ENCODE measurements at regions of chr7 and their contacts with region 1.

Region 1: GRCh38 chr7:129210256-129210988 is 14.4 kb upstream of the AHCYL2 start:
- DNase-seq: peak; percentile 82 to 88 (median 86)
- ATAC-seq: peak; percentile 90
- H3K4me3 ChIP-seq: no peak overlapping the region
- H3K27ac ChIP-seq: no peak overlapping the region
- H3K4me1 ChIP-seq: peaks cover 5 to 7% of the 10 kb centered on the region in 2 experiments; a peak in 3 of 5 replicates
- H3K27me3 ChIP-seq: peaks cover 52 to 75% of the 10 kb centered on the region in 2 experiments
- CTCF ChIP-seq: peak; percentile 93 to 94 (median 94)
- EP300 ChIP-seq: no peak
- POLR2A ChIP-seq: no peak
- RAD21 ChIP-seq: peak; percentile 84 to 94

Region 2: DNA sequence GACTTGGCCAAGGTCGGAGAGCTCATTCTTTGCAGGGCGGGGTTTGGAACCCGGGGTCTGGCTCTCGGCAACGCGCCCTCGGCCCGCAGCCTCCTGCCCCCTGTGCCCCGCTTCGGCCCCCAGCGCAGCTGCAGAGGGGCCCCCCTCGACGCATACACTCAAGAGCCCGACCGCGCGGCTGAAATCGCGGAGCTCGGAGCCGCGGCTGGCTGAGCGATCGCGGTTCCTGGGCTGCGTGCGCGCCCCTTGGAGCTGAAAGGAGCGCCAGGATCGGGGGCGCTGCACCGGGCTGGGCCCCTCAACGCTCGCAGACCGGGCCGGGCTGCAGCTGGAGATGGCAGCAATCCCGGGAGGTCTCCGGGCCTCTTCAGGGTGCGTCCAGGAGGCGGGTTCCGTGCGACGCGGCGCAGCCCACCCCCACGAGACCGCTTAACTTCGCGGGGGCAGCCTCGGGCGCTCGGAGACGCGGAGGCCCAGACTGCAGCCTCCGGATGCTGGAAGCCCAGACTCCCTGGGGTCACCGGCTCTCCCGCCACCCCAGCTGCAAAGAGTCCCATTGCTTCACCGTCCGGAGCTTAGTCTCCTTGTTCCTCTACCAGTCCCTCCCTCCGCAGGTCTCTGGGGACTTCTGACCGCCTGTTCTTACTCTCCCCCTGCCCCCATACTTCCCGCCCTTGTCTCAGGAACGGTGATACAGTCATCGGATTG is 1106.2 kb before region 1 on chr7:
- CTCF ChIA-PET with region 1: no interaction called
- POLR2A ChIA-PET with region 1: no interaction called
- in situ Hi-C with region 1: no loop called
- intact Hi-C with region 1: no loop called
- DNase-seq: no peak
- ATAC-seq: no peak
- H3K4me3 ChIP-seq: no peak overlapping the region
- H3K27ac ChIP-seq: no peak overlapping the region
- H3K4me1 ChIP-seq: peaks cover 9 to 24% of the 10 kb centered on the region in 2 experiments; a peak in 4 of 5 replicates
- H3K27me3 ChIP-seq: peaks cover 9 to 26% of the 10 kb centered on the region in 2 experiments; a peak in 3 of 5 replicates
- CTCF ChIP-seq: no peak
- EP300 ChIP-seq: no peak
- POLR2A ChIP-seq: no peak
- RAD21 ChIP-seq: no peak

Region 3: DNA sequence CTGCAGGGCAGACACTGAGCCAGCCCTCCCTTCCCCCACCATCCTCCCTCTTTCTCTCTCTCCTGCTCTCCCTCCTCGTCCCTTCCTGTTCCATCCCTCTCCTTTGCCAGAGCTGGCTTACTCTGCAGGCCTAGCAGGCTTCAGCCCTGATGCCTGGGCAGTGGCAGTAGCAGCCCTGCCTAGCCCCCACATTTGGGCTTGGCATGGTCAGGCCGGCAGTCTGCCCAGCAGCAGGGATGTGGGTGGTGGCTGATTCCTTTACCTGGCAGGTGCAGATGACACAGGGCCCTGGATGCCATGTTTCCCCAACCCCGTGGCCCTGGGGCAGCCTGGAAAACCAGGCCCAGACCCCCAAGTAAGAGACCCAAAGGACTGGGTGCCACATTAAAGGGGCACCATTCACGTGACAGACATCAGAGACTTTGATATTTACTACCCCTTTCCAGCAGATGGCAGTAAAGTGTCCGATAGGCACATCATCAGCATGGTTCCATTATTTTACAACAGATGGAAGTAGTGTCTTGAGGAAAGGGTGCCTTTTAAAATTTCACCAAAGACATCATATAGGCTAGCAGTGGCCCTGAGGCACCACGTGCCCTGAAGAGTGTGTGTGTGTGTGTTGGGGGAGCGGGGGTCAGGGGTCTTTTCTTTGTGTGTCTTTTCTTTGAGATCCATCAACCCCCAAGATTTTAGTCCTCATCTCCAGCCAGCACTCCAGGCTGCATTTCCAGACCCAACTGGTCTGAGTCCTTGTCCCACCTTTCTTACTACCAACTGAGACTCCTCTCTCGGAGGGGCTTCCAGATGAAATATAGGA is 305.8 kb before region 1 on chr7:
- CTCF ChIA-PET with region 1: interaction called, 5 read pairs
- POLR2A ChIA-PET with region 1: no interaction called
- in situ Hi-C with region 1: no loop called
- intact Hi-C with region 1: loop called (anchors 1 kb)
- DNase-seq: peak; percentile 64 to 78 (median 72)
- ATAC-seq: peak; percentile 76
- H3K4me3 ChIP-seq: no peak overlapping the region
- H3K27ac ChIP-seq: no peak overlapping the region
- H3K4me1 ChIP-seq: peaks cover 13 to 29% of the 10 kb centered on the region in 2 experiments
- H3K27me3 ChIP-seq: peaks cover 16 to 32% of the 10 kb centered on the region in 2 experiments
- CTCF ChIP-seq: peak; percentile 86 to 92 (median 91)
- EP300 ChIP-seq: no peak
- POLR2A ChIP-seq: no peak
- RAD21 ChIP-seq: peak; percentile 60 to 79

Region 4: DNA sequence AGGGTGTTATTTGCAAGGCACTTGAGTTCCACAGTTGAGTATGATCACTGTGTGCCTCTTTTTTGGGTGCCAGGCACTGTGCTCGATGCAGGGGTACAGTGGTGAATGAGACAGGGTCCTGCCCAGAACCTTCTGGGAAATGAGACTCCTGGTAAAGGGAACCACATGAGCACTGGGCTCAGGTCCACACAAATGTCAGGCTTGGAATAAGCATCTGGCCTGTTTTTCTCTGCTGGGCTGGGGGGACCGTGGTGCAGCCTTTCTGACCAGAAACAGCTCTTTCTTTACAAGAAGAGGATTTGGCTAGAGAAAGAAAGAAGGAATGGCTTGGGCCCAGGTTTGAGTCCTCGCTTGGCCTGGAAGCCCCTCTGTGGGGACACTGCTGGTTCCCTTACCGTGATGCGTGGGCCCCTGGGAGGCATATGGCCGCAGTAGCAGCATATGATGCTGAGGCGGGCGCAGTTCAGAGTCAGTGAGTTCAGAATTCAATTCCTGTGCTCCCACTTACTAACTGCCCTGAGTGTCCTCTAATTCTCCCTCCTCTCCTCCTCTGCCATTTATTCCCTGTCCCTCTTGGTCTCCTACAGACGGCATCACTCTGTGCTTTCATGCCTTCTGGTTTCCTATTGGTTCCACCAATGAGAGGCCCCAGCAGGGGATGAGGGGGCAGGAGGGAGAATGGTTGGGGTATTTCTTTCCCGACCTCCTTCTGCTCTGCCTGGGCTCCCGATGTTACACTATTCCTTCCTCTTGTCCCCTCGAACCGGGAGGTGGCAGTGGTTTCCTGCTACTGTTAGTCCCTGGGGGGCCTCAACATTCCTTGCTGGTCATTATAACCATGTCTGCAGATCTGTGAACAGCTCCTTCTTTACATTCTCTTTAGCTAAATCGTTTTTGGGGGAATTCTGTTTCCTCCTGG is 290.3 kb before region 1 on chr7:
- CTCF ChIA-PET with region 1: no interaction called
- POLR2A ChIA-PET with region 1: no interaction called
- in situ Hi-C with region 1: no loop called
- intact Hi-C with region 1: loop called (anchors 5 kb)
- DNase-seq: peak in 1 of 4 experiments; percentile 36
- ATAC-seq: peak; percentile 54
- H3K4me3 ChIP-seq: no peak overlapping the region
- H3K27ac ChIP-seq: no peak overlapping the region
- H3K4me1 ChIP-seq: peaks cover 0 to 10% of the 10 kb centered on the region in 2 experiments; a peak in 2 of 5 replicates
- H3K27me3 ChIP-seq: peaks cover 75 to 82% of the 10 kb centered on the region in 2 experiments
- CTCF ChIP-seq: peak; percentile 33 to 50 (median 35); a peak in 3 of 6 replicates
- EP300 ChIP-seq: no peak
- POLR2A ChIP-seq: no peak
- RAD21 ChIP-seq: peak in 1 of 2 experiments; percentile 53; a peak in 2 of 4 replicates

Region 5: DNA sequence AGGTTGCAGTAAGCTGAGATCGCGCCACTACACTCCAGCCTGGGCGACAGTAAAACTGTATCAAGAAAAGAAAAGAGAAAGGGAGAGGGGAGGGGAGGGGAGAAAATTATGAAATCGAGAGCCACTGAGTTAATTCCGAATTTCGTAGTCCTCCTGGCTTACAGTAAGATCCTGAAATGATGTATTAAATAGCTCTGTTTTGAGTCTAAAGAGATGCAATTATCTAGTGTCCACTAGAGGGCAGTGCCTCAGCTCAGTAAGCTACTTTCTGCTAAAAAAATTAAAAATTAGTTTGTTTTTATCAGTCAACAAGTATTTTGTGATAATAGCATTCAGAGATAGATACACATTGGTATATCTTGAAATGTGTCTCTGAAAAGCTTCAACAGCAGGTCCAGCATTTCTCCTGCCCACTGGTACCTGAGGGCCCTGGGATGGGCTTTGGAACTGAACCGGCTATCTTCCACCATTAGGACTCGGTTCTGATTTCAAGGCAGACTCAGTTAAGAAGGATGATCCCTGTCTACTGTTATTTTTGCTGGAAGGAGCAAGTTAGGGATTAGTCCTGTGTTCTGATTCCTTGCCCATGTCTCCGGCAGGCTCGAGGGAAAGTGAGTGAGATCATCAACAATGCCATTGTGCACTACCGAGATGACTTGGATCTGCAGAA is 46.4 kb before region 1 on chr7:
- CTCF ChIA-PET with region 1: interaction called, 5 read pairs
- POLR2A ChIA-PET with region 1: no interaction called
- in situ Hi-C with region 1: no loop called
- intact Hi-C with region 1: loop called (anchors 1 kb)
- DNase-seq: peak; percentile 65 to 74 (median 68)
- ATAC-seq: peak; percentile 69
- H3K4me3 ChIP-seq: no peak overlapping the region
- H3K27ac ChIP-seq: no peak overlapping the region
- H3K4me1 ChIP-seq: peaks cover 4 to 6% of the 10 kb centered on the region in 2 experiments; a peak in 4 of 5 replicates
- H3K27me3 ChIP-seq: peaks cover 15 to 57% of the 10 kb centered on the region in 2 experiments
- CTCF ChIP-seq: peak; percentile 69 to 96 (median 88); a peak in 5 of 6 replicates
- EP300 ChIP-seq: no peak
- POLR2A ChIP-seq: no peak
- RAD21 ChIP-seq: peak; percentile 55 to 79

Region 6: DNA sequence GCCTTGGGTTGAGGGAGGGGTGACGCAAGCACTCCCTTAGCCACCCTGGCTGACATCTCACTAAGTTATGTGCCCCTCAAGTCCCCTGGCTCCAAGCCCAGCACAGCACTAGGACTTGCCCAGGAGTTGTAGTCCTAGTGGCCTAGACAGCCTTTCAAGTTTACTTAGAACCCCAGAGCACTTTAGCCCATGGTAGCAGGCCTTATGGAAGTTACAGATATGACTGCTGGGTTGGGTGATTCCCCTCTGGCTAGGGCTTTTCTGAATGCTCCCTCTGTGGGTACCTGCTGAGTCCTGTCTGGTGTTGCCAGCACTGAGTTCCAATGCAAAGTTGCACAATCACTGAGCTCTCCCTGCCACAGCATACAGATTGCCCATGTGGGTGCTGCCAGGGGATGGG is 97.6 kb after region 1 on chr7:
- CTCF ChIA-PET with region 1: no interaction called
- POLR2A ChIA-PET with region 1: no interaction called
- in situ Hi-C with region 1: no loop called
- intact Hi-C with region 1: no loop called
- DNase-seq: no peak
- ATAC-seq: no peak; the same call in 1 of the 3 replicates
- H3K4me3 ChIP-seq: no peak overlapping the region
- H3K27ac ChIP-seq: no peak overlapping the region
- H3K4me1 ChIP-seq: no peaks in the 10 kb centered on the region
- H3K27me3 ChIP-seq: peaks cover 0 to 4% of the 10 kb centered on the region in 2 experiments; a peak in 1 of 5 replicates
- CTCF ChIP-seq: no peak
- EP300 ChIP-seq: no peak
- POLR2A ChIP-seq: no peak
- RAD21 ChIP-seq: no peak

Measured in K562 (cell line).